ENCODE measurements at regions of chr21 and their contacts with region 1.

Region 1: DNA sequence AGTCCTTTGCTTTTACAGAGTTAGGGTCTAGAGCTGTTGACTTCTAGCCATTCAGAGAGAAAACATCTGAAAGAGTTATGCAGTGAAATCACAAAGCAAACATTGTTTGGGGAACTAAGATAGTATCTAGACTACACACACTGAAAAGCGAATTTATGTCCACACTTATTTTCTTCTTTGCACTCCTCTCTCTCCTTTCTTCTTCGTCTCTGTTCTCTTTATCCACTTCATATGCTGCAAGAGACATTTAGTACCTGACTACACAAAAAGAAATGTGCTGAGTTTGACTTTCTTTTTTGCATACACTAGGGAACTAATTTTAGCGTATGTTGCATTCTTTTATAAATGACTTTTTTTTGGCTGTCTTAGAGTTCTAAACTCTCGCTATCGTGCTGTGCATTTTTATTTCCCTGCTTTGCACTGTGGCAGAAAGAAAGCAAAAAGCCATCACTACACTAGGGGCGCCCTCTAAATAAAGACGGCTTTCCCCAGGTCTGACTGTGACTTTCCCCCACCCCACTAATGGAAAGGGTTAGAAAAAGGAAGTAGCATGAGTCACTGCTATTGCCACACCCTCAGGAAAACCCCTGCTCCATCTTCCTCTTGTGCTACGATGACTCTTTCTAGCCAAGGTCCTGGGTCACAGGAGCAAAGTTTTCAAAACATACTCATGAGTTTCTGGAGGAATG is 65.7 kb downstream of the MAP3K7CL start:
- DNase-seq: peak; percentile 51
- H3K4me3 ChIP-seq: peak overlapping the region in 1 of 4 donors; percentile 23
- H3K27ac ChIP-seq: peak overlapping the region; percentile 37 to 54 (median 51)
- H3K4me1 ChIP-seq: peaks cover 0 to 22% (median 6%) of the 10 kb centered on the region in 4 donors
- H3K27me3 ChIP-seq: no peaks in the 10 kb centered on the region
- CTCF ChIP-seq: peak in 1 of 5 experiments; percentile 12
- EP300 ChIP-seq: no peak
- POLR2A ChIP-seq: no peak

Region 2: GRCh38 chr21:28818663-28819278 is 377.4 kb before region 1 on chr21:
- in situ Hi-C with region 1: no loop called
- intact Hi-C with region 1: no loop called
- DNase-seq: no peak
- H3K4me3 ChIP-seq: no peak overlapping the region
- H3K27ac ChIP-seq: no peak overlapping the region
- H3K4me1 ChIP-seq: peaks cover 7 to 23% (median 13%) of the 10 kb centered on the region in 4 donors
- H3K27me3 ChIP-seq: no peaks in the 10 kb centered on the region
- CTCF ChIP-seq: no peak
- EP300 ChIP-seq: no peak
- POLR2A ChIP-seq: no peak

Region 3: DNA sequence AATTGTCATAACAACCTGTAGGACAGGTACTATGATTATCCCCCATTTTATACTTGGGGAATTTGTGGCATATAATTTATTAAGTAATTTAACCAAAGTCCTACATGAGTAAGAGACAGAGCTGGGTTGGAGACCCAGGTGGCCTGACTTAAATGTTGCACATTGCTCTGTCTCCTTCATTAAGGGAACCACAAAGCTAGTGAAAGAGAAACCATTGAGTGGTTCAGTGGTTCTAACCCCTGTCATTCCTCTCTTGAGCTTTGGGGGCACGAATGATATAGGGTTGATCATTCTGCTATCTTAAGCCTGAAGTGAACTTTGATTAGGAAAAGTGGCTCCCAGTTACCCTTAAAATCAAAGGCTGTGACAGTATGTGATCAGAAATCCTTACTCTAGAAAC is 70.9 kb before region 1 on chr21:
- in situ Hi-C with region 1: no loop called
- intact Hi-C with region 1: no loop called
- DNase-seq: no peak
- H3K4me3 ChIP-seq: no peak overlapping the region
- H3K27ac ChIP-seq: no peak overlapping the region
- H3K4me1 ChIP-seq: no peaks in the 10 kb centered on the region
- H3K27me3 ChIP-seq: no peaks in the 10 kb centered on the region
- CTCF ChIP-seq: no peak
- EP300 ChIP-seq: no peak
- POLR2A ChIP-seq: no peak

Region 4: DNA sequence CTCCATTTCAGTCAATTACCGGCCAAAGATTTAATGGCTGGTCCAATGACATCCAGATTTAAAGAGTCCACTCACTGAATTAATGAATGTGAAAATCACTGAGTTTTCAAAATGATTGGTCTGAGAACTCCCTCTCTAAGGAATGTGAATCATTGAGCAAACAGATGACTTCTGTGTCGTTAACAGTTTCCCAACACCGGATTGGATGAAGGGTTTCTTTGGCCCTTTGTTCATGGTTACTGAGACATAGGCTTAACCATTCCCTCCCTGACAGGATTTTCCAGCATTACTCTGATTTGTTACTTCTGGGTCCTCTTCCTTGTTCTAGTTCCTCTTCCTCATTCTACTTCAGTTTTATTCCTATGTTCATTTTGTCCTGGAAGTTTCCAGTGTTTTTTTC is 972.0 kb after region 1 on chr21:
- in situ Hi-C with region 1: no loop called
- intact Hi-C with region 1: loop called (anchors 10 kb)
- DNase-seq: no peak
- H3K4me3 ChIP-seq: no peak overlapping the region
- H3K27ac ChIP-seq: no peak overlapping the region
- H3K4me1 ChIP-seq: no peaks in the 10 kb centered on the region
- H3K27me3 ChIP-seq: no peaks in the 10 kb centered on the region
- CTCF ChIP-seq: no peak
- EP300 ChIP-seq: no peak
- POLR2A ChIP-seq: no peak

Measured in transverse colon (tissue), 4 donors.